ENCODE measurements at regions of chr10 and their contacts with region 1.

Region 1: GRCh38 chr10:88865281-88865876 is 13.7 kb upstream of the ANKRD22 start:
- DNase-seq: no peak
- H3K4me3 ChIP-seq: no peak overlapping the region
- H3K27ac ChIP-seq: no peak overlapping the region
- H3K27me3 ChIP-seq: peaks cover 0 to 4% (median 0%) of the 10 kb centered on the region in 45 donors
- CTCF ChIP-seq: peak in 13 of 56 donors; percentile 9 to 41 (median 22)

Region 2: DNA sequence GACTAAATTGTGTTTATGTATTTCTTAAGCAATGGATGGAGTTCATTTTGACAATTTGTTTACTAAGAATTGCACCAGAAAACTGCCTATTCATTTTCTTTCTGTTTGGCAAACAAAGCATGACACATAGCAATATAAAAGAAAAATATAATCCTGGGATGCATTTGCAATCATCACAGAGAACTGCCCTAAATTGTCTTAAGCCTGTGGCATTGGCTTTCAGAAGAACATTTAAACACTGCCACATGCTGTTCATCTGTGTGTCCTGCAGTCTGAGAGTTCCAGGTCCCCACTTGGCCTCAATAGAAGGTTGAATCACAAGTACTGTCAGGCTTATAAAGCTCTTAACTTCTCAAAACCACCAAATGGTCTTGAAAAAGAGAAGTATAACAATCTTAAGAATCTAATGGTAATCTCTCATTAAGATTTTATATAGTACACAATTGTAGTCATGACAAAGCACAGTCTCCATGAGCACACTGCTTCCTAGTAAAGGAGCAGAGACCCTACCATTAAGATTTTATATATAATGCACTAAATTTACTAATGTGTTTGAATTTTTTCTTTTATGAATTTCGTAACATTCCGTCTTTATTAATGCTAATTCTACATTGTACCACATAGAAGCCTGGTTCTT is 312.1 kb before region 1 on chr10:
- intact Hi-C with region 1: no loop called
- DNase-seq: peak in 6 of 10 donors; percentile 6 to 63 (median 36)
- H3K4me3 ChIP-seq: no peak overlapping the region
- H3K27ac ChIP-seq: no peak overlapping the region
- H3K27me3 ChIP-seq: no peaks in the 10 kb centered on the region
- CTCF ChIP-seq: peak; percentile 51 to 89 (median 76)

Region 3: GRCh38 chr10:88990384-88991160 is 125.2 kb after region 1 on chr10 and contains the start of gene FAS:
- intact Hi-C with region 1: loop called in 1 of 2 experiments (anchors 10 kb)
- DNase-seq: peak in 8 of 10 donors; percentile 16 to 65 (median 40)
- H3K4me3 ChIP-seq: peak within 1 kb of the TSS; percentile 63 to 94 (median 82)
- H3K27ac ChIP-seq: peak within 1 kb of the TSS; percentile 36 to 97 (median 89)
- H3K27me3 ChIP-seq: no peaks in the 10 kb centered on the region
- CTCF ChIP-seq: peak in 4 of 56 donors; percentile 3 to 6 (median 5)
- total RNA-seq, gene FAS: 3.2 to 28.4 (median 12.1) TPM